BJ (cell line): ENCODE measurements at regions of chr6 and their contacts with region 1.

Region 1: DNA sequence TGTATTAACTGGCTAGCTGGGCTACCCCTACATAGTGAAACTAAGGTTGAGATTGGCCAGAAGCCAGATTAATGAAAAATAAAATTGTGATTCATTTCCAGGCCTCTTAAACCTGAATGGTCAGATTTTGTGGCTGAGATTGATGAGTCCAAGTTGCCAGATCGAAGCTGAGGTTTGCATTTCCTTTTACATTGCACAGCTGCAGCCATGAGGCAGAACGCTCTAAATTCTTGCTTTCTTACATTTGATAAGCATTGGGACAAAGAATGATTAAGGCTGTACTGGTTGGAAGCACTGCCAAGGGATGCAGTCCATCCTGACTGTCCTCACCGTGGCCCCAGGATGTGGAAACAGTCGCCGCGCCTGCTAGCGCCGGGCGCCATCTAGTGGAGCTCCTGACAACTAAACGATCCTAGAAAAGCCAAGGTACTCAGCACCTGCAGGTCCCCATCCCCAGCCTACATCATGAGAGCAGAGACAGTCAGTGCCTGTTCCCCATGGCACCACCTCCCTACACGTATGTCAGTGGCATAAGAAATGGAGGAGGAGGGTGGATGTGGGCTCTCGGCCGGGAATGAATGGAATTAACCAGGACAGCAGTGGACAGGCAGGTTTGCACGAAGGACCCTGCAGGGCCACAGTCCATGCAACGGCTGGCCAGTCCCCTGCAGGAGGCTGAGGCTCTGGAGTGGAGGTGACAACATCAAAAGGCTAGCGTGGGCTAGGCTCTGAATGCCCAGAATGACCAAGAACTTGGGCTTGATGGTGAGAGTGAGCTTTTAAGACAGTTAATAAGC is 19.0 kb downstream of the PXDC1 start:
- DNase-seq: no peak
- H3K4me3 ChIP-seq: no peak overlapping the region
- H3K27me3 ChIP-seq: no peaks in the 10 kb centered on the region
- CTCF ChIP-seq: peak; percentile 91

Region 2: DNA sequence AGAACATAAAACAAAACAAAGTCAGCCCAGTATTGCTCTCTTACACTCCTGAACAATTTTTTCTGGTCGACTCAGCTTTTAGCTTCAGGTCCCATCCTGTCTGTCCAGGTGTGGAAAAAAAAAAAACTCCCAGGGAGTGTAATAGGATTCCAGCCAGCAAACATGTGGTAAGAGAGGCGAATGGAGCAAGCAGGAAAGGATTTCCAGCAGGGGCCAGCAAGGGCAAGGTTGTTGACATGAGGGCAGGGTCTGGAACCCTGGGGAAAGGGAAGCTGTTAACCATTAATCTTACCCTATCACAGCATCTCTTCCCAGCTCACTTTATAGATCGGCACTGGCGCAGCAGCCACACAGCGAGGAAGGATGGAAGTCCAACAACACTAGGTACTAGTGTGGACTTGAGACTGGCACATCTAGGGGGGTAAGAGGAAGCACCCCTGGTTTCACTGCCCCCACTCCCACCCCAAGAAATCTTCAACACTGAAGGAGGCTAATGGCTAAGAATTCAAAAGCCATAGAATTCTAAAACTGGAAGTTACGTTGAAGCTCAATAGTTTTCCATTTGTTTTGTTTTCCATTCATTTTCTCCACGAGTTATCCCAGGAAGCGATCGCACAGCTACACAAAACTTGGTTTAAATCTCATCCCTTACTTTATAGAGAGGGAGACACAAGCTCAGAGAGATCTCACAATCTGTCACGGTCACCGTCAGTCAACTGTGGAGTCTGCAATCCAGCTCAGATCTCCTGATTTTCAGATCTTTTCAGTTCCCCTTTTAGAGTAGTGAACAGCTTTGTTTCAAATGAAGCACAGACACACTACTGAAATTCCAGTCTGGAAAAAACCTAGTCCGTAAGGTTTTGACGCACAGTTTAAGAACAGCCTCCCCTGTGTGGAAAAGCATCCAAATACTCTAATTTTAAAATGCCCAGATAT is 329.0 kb before region 1 on chr6:
- CTCF ChIA-PET with region 1: interaction called, 22 read pairs
- POLR2A ChIA-PET with region 1: no interaction called
- DNase-seq: no peak
- H3K4me3 ChIP-seq: no peak overlapping the region
- H3K27me3 ChIP-seq: no peaks in the 10 kb centered on the region
- CTCF ChIP-seq: no peak

Region 3: DNA sequence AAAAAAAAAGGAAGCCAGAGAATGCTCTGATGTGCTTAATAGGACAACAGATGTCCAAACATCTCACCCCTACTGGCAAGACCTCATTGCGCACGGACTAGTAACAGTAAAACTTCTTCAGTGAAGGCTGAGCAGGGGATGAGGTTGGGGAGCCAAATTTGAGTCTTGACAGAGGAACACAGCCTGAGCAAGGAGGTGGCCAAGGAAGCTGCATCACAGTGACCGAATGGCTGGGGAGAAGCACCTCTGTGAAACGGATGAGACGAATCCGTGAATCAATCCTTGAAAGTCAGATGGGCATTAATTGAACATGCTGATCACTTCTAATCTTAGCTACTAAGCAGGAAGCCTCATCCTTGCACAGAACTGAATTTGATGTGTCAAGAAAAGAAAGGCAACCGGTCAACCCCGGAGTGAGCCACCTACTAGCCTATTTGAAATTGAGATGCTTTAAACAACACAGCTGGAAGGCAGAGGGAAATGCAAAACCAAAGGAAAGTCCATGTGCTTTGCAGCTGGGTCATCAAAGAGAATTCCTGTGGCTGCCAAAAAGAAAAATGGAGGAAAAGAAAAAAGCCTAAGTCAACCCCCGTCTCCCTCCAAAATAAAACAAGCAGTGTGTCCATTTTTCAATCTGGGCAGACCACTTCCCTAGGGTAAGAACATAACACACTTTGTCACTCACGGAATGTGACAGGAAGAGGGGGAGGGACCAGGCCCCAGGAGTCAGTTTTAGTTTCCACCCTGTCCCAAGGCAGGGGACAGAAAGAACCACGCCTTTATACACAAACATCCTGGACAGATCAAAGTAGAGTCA is 10.5 kb before region 1 on chr6:
- CTCF ChIA-PET with region 1: interaction called, 22 read pairs
- POLR2A ChIA-PET with region 1: interaction called, 3 read pairs
- DNase-seq: peak; percentile 34
- H3K4me3 ChIP-seq: no peak overlapping the region
- H3K27me3 ChIP-seq: no peaks in the 10 kb centered on the region
- CTCF ChIP-seq: no peak

Region 4: GRCh38 chr6:3748208-3749066 is 15.9 kb after region 1 on chr6:
- CTCF ChIA-PET with region 1: interaction called, 15 read pairs
- POLR2A ChIA-PET with region 1: no interaction called
- DNase-seq: peak; percentile 24
- H3K4me3 ChIP-seq: peak overlapping the region; percentile 65
- H3K27me3 ChIP-seq: no peaks in the 10 kb centered on the region
- CTCF ChIP-seq: peak; percentile 82